ENCODE measurements at regions of chr22 and their contacts with region 1.

Region 1: DNA sequence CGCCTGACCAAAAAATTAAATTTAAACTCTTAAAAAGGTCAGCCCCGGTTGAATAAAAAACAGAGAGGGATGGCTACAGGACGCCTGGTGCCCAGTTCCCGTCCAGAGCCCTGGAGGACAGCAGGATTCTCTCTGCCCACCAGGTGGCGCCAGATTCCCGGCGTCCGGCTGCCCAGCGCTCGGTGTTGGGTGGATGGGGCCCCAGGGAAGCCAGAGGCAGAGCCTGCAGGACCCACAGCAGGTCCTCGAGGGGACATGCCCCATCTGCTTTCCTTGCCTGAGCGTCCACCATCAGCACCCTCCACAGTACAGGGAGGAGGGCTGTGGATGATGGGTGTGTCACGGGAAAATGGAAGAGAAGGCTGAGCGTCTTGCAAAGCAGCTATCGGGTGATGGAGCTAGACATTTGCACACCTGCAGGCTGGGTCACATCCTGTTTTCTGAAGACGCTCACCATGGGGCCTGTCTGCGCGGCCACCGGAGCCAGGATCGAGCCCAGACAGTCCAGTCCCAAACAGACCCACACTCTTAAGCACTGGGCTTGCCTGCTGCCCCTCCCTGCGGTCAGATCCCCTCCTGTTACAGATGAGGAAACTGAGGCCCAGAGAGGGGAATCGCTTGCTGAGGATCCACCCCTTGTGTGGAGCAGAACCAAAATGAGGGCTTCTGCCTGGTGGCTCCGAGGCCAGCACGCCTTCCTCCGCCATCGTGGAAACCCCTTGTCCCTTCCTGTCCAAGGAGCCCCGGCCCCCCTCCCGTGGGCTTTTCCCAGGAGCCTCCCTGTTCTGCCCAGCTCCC is 18.5 kb upstream of the CBX7 start:
- DNase-seq: peak; percentile 89
- H3K4me3 ChIP-seq: no peak overlapping the region
- H3K27ac ChIP-seq: peak overlapping the region; percentile 24 to 47 (median 28)
- H3K4me1 ChIP-seq: peaks cover 0 to 39% (median 36%) of the 10 kb centered on the region in 4 donors
- H3K27me3 ChIP-seq: no peaks in the 10 kb centered on the region
- CTCF ChIP-seq: peak; percentile 84 to 96 (median 94)
- EP300 ChIP-seq: no peak
- POLR2A ChIP-seq: no peak

Region 2: DNA sequence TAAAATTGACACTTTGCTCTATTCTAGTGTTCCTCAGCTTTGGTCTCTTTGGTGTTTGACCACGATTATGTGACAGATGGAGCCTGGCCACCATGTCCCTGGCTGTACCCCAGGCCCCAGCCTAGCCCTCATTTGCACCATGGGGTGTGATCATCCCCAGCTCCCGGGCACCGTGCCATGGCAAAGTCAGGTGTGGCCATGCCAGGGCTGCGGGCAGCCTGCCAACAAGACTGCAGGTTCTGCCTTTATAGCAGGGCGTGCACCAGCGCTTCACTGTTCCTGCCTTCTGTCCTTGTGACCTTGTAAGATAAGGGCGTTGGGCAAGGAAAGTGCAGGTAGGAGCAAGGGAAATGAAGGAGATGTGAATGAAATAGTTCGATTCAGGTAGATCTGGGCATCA is 236.0 kb before region 1 on chr22:
- intact Hi-C with region 1: no loop called
- DNase-seq: no peak
- H3K4me3 ChIP-seq: no peak overlapping the region
- H3K27ac ChIP-seq: no peak overlapping the region
- H3K4me1 ChIP-seq: no peaks in the 10 kb centered on the region
- H3K27me3 ChIP-seq: no peaks in the 10 kb centered on the region
- CTCF ChIP-seq: no peak
- EP300 ChIP-seq: no peak
- POLR2A ChIP-seq: no peak

Region 3: DNA sequence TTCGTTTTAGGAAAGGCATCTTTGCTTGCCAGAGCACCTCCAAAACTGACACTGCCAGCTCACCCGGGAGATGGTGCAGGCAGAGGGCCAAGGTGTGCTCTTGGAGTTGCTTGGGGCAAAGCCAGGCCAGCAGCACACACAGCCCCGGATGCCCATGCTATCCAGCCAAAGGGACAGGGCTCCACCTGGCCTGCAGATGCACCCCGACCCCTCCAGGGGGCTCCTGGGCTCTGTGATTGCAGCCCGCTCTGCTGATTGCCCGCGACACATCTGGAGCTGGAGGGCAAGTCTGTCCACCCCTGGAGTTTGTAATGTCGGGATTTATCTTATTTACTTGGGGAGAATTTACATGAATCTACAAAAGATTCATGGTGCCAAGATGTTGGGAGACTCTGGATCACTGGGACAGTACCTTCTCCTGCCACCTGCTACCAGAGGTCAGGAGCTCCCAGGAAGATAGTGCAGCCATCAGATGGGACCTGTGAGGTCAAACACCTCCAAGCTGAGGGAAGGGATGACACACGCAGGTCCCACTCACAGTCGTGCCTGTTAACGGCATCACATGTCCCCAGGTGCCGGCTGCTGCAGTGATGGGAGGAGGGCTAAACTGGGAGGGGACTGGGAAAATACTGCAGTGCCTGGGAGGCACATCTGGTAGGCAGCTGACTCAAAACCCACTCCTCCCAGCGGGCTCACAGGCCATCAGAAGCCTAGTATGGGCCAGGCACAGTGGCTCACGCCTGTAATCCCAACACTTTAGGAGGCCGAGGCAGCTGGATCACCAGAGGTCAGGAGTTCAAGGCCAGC is 35.7 kb before region 1 on chr22:
- intact Hi-C with region 1: no loop called
- DNase-seq: peak; percentile 89
- H3K4me3 ChIP-seq: no peak overlapping the region
- H3K27ac ChIP-seq: peak overlapping the region in 3 of 4 donors; percentile 54 to 60 (median 59)
- H3K4me1 ChIP-seq: peaks cover 0 to 39% (median 34%) of the 10 kb centered on the region in 4 donors
- H3K27me3 ChIP-seq: no peaks in the 10 kb centered on the region
- CTCF ChIP-seq: peak in 2 of 4 experiments; percentile 52 to 64
- EP300 ChIP-seq: no peak
- POLR2A ChIP-seq: no peak

Region 4: DNA sequence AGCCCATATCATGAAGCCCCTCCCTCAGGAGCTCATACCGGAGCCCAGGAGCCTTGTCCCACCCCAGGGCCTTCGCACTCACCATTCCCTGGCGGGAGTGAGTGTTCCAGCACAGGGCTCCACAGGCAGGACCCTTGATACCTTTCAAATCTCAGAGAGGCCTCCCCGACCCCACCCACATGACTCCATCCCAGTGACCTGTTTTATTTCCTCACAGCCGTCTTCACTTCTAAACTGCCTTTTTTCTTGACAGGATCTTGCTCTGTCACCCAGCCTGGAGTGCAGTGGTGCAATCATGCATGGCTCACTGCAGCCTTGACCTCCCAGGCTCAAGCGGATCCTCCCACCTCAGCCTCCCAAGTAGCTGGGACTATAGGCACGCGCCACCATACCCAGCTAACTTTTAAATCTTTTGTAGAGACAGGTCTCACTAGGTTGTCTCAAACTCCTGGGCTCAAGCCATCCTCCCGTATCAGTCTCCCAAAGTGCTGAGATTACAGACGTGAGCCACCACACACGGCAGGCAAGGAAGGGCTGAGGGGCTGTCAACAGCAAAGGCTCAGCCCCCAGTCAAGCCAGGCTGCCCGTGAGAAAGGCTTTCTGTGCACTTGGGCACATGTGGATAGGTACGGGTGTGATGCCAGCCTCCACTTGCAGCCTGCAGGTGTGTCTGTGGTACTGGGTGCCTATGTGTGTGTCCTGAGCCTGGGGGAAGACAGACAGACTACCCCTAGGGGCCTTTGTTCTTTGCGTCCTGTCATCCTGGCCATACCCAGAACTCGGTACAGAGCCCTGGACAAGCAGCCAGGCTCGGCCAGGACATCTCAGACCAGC is 139.1 kb after region 1 on chr22:
- intact Hi-C with region 1: loop called (anchors 1 kb)
- DNase-seq: no peak
- H3K4me3 ChIP-seq: no peak overlapping the region
- H3K27ac ChIP-seq: peak overlapping the region; percentile 45 to 82 (median 78)
- H3K4me1 ChIP-seq: peaks cover 0 to 34% (median 23%) of the 10 kb centered on the region in 4 donors
- H3K27me3 ChIP-seq: no peaks in the 10 kb centered on the region
- CTCF ChIP-seq: no peak
- EP300 ChIP-seq: no peak
- POLR2A ChIP-seq: no peak

Region 5: DNA sequence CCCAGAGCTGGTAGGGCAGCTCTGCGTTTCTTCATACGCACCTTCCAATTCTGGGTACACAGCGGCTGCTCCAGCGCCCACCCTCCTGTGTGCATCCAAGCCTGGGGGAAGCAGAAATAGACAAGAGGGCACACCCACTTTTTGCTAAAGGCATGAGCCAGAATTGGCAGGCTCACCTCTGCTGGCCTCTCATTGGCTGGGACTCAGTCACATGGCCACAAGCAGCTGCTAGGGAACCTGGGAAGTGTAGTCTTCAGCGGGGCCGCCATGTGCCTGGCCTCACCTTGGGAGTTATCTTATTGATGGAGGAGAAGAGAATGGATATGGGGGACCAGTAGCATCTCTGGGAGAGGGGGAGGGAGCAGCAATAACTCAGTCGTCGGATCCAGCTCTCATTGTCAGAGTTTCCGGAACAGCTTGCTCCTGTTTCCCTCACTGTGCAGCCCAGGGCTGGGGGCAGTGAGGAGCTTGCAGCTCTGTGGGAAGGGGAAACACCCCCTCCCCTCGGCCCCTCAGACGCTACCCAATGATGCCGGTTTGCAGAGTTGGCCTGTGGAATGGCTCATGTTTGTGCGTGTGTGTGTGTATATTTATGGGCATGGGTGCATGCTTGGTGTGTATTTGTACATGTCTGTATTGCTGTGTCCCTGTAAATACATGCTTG is 319.2 kb after region 1 on chr22:
- intact Hi-C with region 1: no loop called
- DNase-seq: peak; percentile 85
- H3K4me3 ChIP-seq: no peak overlapping the region
- H3K27ac ChIP-seq: no peak overlapping the region
- H3K4me1 ChIP-seq: no peaks in the 10 kb centered on the region
- H3K27me3 ChIP-seq: no peaks in the 10 kb centered on the region
- CTCF ChIP-seq: no peak
- EP300 ChIP-seq: no peak
- POLR2A ChIP-seq: no peak